ENCODE measurements at regions of chr3 and their contacts with region 1.

Region 1: GRCh38 chr3:101676765-101677435 is at the start of gene ZBTB11:
- DNase-seq: peak; percentile 100
- H3K4me3 ChIP-seq: peak within 1 kb of the TSS; percentile 99
- H3K27ac ChIP-seq: peak within 1 kb of the TSS; percentile 100
- H3K4me1 ChIP-seq: peaks cover 4% of the 10 kb centered on the region
- H3K27me3 ChIP-seq: no peaks in the 10 kb centered on the region
- CTCF ChIP-seq: peak; percentile 37
- total RNA-seq, gene ZBTB11: 12.2 to 14.3 TPM

Region 2: GRCh38 chr3:101556064-101556463 is 120.8 kb before region 1 on chr3:
- intact Hi-C with region 1: no loop called
- DNase-seq: no peak
- H3K4me3 ChIP-seq: no peak overlapping the region
- H3K27ac ChIP-seq: no peak overlapping the region
- H3K4me1 ChIP-seq: no peaks in the 10 kb centered on the region
- H3K27me3 ChIP-seq: no peaks in the 10 kb centered on the region
- CTCF ChIP-seq: no peak

Region 3: GRCh38 chr3:101574388-101575156 is 102.3 kb before region 1 on chr3:
- intact Hi-C with region 1: loop called (anchors 5 kb)
- DNase-seq: peak; percentile 53
- H3K4me3 ChIP-seq: peak overlapping the region; percentile 92
- H3K27ac ChIP-seq: peak overlapping the region; percentile 97
- H3K4me1 ChIP-seq: peaks cover 8% of the 10 kb centered on the region
- H3K27me3 ChIP-seq: no peaks in the 10 kb centered on the region
- CTCF ChIP-seq: no peak

Region 4: DNA sequence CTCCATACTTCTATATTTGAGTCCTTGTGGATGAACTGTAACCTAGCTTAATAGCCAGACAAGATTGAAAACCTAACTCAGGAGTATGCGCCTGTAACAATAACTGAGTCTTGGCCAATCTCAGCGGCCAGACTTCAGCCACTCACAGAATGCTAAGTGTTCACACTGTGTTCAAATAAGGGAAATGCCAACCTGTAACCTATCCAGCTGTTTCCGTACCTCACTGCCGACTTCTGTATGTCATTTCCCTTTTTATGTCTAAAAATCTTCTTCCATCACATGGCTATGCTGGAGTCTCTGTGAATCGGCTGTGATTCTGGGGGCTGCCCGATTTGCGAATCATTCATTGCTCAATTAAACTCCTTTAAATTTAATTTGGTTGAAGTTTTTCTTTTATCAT is 341.7 kb after region 1 on chr3:
- intact Hi-C with region 1: no loop called
- DNase-seq: no peak
- H3K4me3 ChIP-seq: no peak overlapping the region
- H3K27ac ChIP-seq: no peak overlapping the region
- H3K4me1 ChIP-seq: no peaks in the 10 kb centered on the region
- H3K27me3 ChIP-seq: no peaks in the 10 kb centered on the region
- CTCF ChIP-seq: no peak